ENCODE measurements at regions of chr5 and their contacts with region 1.

Region 1: GRCh38 chr5:137836997-137837396 is 30.7 kb upstream of the MYOT start:
- DNase-seq: no peak

Region 2: GRCh38 chr5:137880313-137880712 is 43.3 kb after region 1 on chr5:
- intact Hi-C with region 1: loop called (anchors 2 kb)
- DNase-seq: no peak

Measured in cardiac septum (tissue), 1 donor.